ENCODE measurements at regions of chr4 and their contacts with region 1.

Region 1: GRCh38 chr4:81214881-81215868 is at the start of gene PRKG2:
- DNase-seq: no peak
- H3K4me3 ChIP-seq: peak within 1 kb of the TSS; percentile 69 to 84 (median 74)
- H3K27ac ChIP-seq: peak within 1 kb of the TSS; percentile 80 to 89 (median 87)
- H3K4me1 ChIP-seq: peaks cover 2 to 23% (median 20%) of the 10 kb centered on the region in 4 donors
- H3K27me3 ChIP-seq: peaks cover 0 to 7% (median 0%) of the 10 kb centered on the region in 4 donors
- CTCF ChIP-seq: peak in 1 of 3 experiments; percentile 16
- EP300 ChIP-seq: no peak
- POLR2A ChIP-seq: no peak
- total RNA-seq, gene PRKG2: 7.3 to 11.2 (median 8.8) TPM

Region 2: DNA sequence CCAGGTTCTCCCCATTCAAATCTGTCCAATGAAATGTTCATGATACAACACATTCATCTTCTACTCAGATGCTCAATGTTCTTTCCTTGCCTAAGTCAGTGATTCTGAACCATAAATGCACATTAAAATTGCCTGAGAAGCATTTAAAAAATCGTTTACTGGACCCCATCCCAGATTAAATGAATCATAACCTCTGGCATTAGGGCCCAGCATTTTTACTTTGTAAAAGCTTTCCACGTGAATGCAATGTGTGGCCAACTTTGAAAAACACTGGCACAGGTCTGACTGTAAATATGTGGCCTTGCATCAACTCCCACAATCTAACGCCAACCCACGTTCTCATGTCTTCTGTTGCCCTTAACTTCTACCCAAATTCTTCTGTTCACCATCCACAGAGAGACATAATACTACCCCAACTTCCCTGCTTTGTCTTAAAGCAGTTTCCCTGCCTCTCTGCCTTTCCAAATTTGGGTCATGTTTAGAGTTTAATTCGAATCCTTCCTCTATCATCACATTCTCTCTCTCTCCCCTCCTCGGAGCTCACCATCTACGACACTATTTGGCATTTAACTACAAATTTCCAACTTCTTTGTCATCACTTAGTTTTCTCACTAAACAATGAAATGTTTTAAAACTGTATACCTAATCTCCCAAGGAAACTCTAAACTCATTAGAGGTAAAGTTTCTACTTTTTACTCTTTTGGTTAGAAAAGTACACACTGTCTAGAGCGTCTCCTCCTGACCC is 78.8 kb before region 1 on chr4:
- intact Hi-C with region 1: loop called (anchors 5 kb)
- DNase-seq: no peak
- H3K4me3 ChIP-seq: peak overlapping the region in 1 of 4 donors; percentile 3
- H3K27ac ChIP-seq: peak overlapping the region; percentile 63 to 77 (median 74)
- H3K4me1 ChIP-seq: peaks cover 0 to 21% (median 19%) of the 10 kb centered on the region in 4 donors
- H3K27me3 ChIP-seq: no peaks in the 10 kb centered on the region
- CTCF ChIP-seq: no peak
- EP300 ChIP-seq: no peak
- POLR2A ChIP-seq: no peak

Region 3: DNA sequence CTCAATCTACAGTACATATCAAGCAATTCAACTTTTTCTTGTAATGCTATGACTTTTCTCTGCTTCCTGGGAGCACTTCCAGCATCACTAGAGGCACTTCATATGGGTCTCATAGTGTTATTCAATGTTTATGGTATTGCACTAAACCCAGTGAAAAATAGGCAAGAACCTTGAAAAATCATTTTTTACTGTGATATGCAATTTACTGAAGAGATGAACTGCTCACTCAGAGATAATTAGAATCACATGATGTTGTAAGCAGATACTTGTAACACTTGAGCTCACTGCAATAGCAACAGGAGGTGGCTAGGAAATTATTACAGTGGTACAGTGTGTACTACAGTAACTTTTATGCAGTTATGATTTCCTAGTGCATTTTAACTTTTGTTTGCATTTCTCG is 163.2 kb after region 1 on chr4:
- intact Hi-C with region 1: no loop called
- DNase-seq: no peak
- H3K4me3 ChIP-seq: no peak overlapping the region
- H3K27ac ChIP-seq: no peak overlapping the region
- H3K4me1 ChIP-seq: no peaks in the 10 kb centered on the region
- H3K27me3 ChIP-seq: no peaks in the 10 kb centered on the region
- CTCF ChIP-seq: no peak
- EP300 ChIP-seq: no peak
- POLR2A ChIP-seq: no peak

Measured in esophagus muscularis mucosa (tissue), 4 donors.